ENCODE measurements at regions of chr11 and their contacts with region 1.

Region 1: GRCh38 chr11:9506489-9507276 is 45.9 kb downstream of the ZNF143 start:
- DNase-seq: peak; percentile 39
- ATAC-seq: peak; percentile 80
- H3K4me3 ChIP-seq: no peak overlapping the region
- H3K27ac ChIP-seq: no peak overlapping the region
- H3K4me1 ChIP-seq: peaks cover 4% of the 10 kb centered on the region
- H3K27me3 ChIP-seq: no peaks in the 10 kb centered on the region
- CTCF ChIP-seq: peak; percentile 78 to 93 (median 92)
- EP300 ChIP-seq: no peak
- POLR2A ChIP-seq: no peak
- RAD21 ChIP-seq: peak; percentile 97

Region 2: GRCh38 chr11:9015677-9016076 is 491.0 kb before region 1 on chr11:
- CTCF ChIA-PET with region 1: interaction called, 45 read pairs
- POLR2A ChIA-PET with region 1: no interaction called
- RAD21 ChIA-PET with region 1: interaction called, 20 read pairs
- SMC1A ChIA-PET with region 1: interaction called, 27 read pairs
- in situ Hi-C with region 1: no loop called
- intact Hi-C with region 1: loop called (anchors 5 kb)
- DNase-seq: peak; percentile 31
- ATAC-seq: peak; percentile 99
- H3K4me3 ChIP-seq: no peak overlapping the region
- H3K27ac ChIP-seq: no peak overlapping the region
- H3K4me1 ChIP-seq: no peaks in the 10 kb centered on the region; the same call in none of the 2 replicates
- H3K27me3 ChIP-seq: no peaks in the 10 kb centered on the region; a peak in 1 of 4 replicates
- CTCF ChIP-seq: peak; percentile 77 to 90 (median 81)
- EP300 ChIP-seq: no peak
- POLR2A ChIP-seq: no peak
- RAD21 ChIP-seq: peak; percentile 77

Region 3: GRCh38 chr11:9170450-9170849 is 336.2 kb before region 1 on chr11:
- CTCF ChIA-PET with region 1: interaction called, 73 read pairs
- POLR2A ChIA-PET with region 1: no interaction called
- RAD21 ChIA-PET with region 1: interaction called, 33 read pairs
- SMC1A ChIA-PET with region 1: interaction called, 38 read pairs
- in situ Hi-C with region 1: no loop called
- intact Hi-C with region 1: loop called (anchors 1 kb)
- DNase-seq: no peak
- ATAC-seq: no peak
- H3K4me3 ChIP-seq: no peak overlapping the region
- H3K27ac ChIP-seq: no peak overlapping the region
- H3K4me1 ChIP-seq: no peaks in the 10 kb centered on the region
- H3K27me3 ChIP-seq: no peaks in the 10 kb centered on the region
- CTCF ChIP-seq: no peak
- EP300 ChIP-seq: no peak
- POLR2A ChIP-seq: no peak
- RAD21 ChIP-seq: no peak

Region 4: GRCh38 chr11:9280655-9281301 is 225.9 kb before region 1 on chr11:
- CTCF ChIA-PET with region 1: interaction called, 14 read pairs
- POLR2A ChIA-PET with region 1: no interaction called
- RAD21 ChIA-PET with region 1: interaction called, 13 read pairs
- SMC1A ChIA-PET with region 1: interaction called, 6 read pairs
- in situ Hi-C with region 1: no loop called
- intact Hi-C with region 1: no loop called
- DNase-seq: peak; percentile 58
- ATAC-seq: peak; percentile 97
- H3K4me3 ChIP-seq: no peak overlapping the region
- H3K27ac ChIP-seq: peak overlapping the region; percentile 44
- H3K4me1 ChIP-seq: peaks cover 11% of the 10 kb centered on the region
- H3K27me3 ChIP-seq: no peaks in the 10 kb centered on the region
- CTCF ChIP-seq: no peak
- EP300 ChIP-seq: no peak
- POLR2A ChIP-seq: no peak
- RAD21 ChIP-seq: no peak

Region 5: GRCh38 chr11:9460322-9461067 is 46.2 kb before region 1 on chr11 and contains the start of gene ZNF143:
- CTCF ChIA-PET with region 1: interaction called, 35 read pairs
- POLR2A ChIA-PET with region 1: interaction called, 9 read pairs
- RAD21 ChIA-PET with region 1: interaction called, 11 read pairs
- SMC1A ChIA-PET with region 1: interaction called, 21 read pairs
- in situ Hi-C with region 1: no loop called
- intact Hi-C with region 1: loop called (anchors 2 kb)
- DNase-seq: peak; percentile 99
- ATAC-seq: peak; percentile 88
- H3K4me3 ChIP-seq: peak within 1 kb of the TSS; percentile 98
- H3K27ac ChIP-seq: peak within 1 kb of the TSS; percentile 100
- H3K4me1 ChIP-seq: peaks cover 7% of the 10 kb centered on the region
- H3K27me3 ChIP-seq: no peaks in the 10 kb centered on the region
- CTCF ChIP-seq: no peak
- EP300 ChIP-seq: peak in 1 of 2 experiments; percentile 9; a peak in 1 of 4 replicates
- POLR2A ChIP-seq: peak; percentile 90
- RAD21 ChIP-seq: no peak
- polyA plus RNA-seq, gene ZNF143: 16.1 to 18.3 TPM

Region 6: DNA sequence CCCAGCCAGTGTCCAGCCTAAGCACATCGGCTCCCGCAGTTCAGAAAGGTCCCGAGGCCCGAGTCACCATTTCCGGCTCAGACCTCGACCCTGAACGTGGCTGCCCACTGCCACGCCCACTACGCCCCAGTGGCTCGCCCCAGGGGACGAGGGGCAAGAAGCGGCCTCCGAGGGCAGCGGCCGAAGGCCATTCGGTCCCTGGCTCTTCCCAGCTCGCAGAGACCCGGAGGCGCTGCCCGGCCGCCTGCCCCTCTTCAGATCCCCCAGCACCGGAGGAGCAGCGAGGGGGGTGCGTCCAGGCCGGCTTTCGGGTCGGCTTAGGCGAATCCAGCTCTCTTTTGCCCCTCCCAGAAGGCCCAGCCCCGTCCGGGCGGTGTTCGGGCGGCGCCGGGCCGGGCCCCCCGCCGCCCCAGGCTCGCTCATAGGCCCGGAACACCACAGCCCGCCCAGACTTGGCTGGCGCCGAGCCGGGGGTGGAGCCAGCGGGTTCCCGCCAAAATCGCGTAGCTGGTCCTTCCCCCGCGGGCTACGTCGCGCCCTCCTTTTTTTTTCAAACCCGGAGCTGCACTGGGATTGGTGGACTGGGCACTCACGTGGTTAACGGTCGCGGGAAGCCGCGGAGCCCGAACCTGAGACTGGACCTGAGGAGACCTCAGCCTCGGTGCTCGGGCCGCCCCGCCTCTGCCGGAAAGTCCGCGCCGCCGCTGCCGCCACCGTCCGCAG is 66.5 kb after region 1 on chr11 and contains the start of gene WEE1:
- CTCF ChIA-PET with region 1: interaction called, 13 read pairs
- POLR2A ChIA-PET with region 1: interaction called, 6 read pairs
- RAD21 ChIA-PET with region 1: interaction called, 9 read pairs
- SMC1A ChIA-PET with region 1: interaction called, 4 read pairs
- in situ Hi-C with region 1: no loop called
- intact Hi-C with region 1: no loop called
- DNase-seq: peak; percentile 86
- ATAC-seq: peak; percentile 94
- H3K4me3 ChIP-seq: peak within 1 kb of the TSS; percentile 90
- H3K27ac ChIP-seq: peak within 1 kb of the TSS; percentile 90
- H3K4me1 ChIP-seq: peaks cover 6% of the 10 kb centered on the region; the same call in 1 of the 2 replicates
- H3K27me3 ChIP-seq: no peaks in the 10 kb centered on the region
- CTCF ChIP-seq: no peak
- EP300 ChIP-seq: no peak
- POLR2A ChIP-seq: peak; percentile 84
- RAD21 ChIP-seq: no peak
- polyA plus RNA-seq, gene WEE1: 20.6 to 22.2 TPM

Region 7: GRCh38 chr11:9619753-9620365 is 113.2 kb after region 1 on chr11:
- CTCF ChIA-PET with region 1: no interaction called
- POLR2A ChIA-PET with region 1: no interaction called
- RAD21 ChIA-PET with region 1: no interaction called
- SMC1A ChIA-PET with region 1: no interaction called
- in situ Hi-C with region 1: no loop called
- intact Hi-C with region 1: no loop called
- DNase-seq: no peak
- ATAC-seq: no peak
- H3K4me3 ChIP-seq: no peak overlapping the region
- H3K27ac ChIP-seq: no peak overlapping the region
- H3K4me1 ChIP-seq: peaks cover 32% of the 10 kb centered on the region
- H3K27me3 ChIP-seq: no peaks in the 10 kb centered on the region
- CTCF ChIP-seq: no peak
- EP300 ChIP-seq: no peak
- POLR2A ChIP-seq: no peak
- RAD21 ChIP-seq: no peak

Region 8: GRCh38 chr11:9663699-9664275 is 157.1 kb after region 1 on chr11 and contains the start of gene SWAP70:
- CTCF ChIA-PET with region 1: no interaction called
- POLR2A ChIA-PET with region 1: no interaction called
- RAD21 ChIA-PET with region 1: no interaction called
- SMC1A ChIA-PET with region 1: no interaction called
- in situ Hi-C with region 1: no loop called
- intact Hi-C with region 1: no loop called
- DNase-seq: no peak
- ATAC-seq: peak; percentile 88
- H3K4me3 ChIP-seq: peak within 1 kb of the TSS; percentile 97
- H3K27ac ChIP-seq: peak within 1 kb of the TSS; percentile 86
- H3K4me1 ChIP-seq: peaks cover 26% of the 10 kb centered on the region
- H3K27me3 ChIP-seq: no peaks in the 10 kb centered on the region
- CTCF ChIP-seq: no peak
- EP300 ChIP-seq: no peak
- POLR2A ChIP-seq: peak; percentile 88
- RAD21 ChIP-seq: no peak
- polyA plus RNA-seq, gene SWAP70: 28.7 to 30.9 TPM